ENCODE measurements at regions of chr11 and their contacts with region 1.

Region 1: DNA sequence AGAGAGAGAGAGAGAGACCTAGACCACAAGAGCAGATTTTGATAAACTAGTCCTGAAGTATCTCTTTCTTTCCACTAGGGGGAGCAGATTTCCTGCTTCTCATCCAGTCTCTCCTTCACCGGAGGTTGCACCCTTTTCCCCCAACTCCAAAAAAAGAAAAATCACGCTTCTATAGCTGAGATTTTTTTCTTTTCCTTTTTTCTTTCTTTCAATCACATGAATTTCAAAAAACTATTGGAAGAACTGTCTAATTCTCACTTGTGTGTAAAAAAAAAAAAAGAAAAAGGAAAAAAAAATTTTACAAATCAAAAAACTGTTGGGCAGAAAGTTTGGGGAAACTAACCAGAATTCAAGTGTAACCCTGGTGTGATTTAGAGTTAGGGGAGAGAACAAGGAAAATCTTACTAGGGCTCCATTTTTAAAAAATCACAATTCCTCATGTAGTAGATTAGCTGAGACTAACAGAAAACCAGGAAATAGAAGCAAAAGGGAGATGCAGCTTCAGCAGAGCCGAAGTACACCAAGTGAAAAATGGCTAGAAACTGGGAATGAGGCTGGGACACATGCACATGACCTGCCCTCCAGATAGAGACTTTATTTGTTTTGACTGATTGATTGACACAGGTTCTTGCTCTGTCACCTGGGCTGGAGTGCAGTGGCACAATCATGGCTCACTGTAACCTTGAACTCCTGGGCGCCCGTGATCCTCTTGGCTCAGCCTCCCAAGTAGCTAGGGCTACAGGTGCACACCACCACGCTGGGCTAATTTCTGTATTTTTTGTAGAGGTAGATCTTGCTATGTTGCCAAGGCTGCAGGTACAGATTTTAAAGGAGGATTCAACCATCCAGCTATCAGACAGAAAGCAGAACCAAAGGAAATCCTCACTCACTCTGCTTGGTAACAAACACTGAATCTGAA is 27.1 kb downstream of the SDHD start:
- DNase-seq: peak in 1 of 2 donors; percentile 67
- ATAC-seq: peak; percentile 69 to 78 (median 77)
- H3K4me3 ChIP-seq: no peak overlapping the region
- H3K4me3 Mint-ChIP-seq: peak overlapping the region; percentile 17
- H3K27ac ChIP-seq: no peak overlapping the region
- H3K27ac Mint-ChIP-seq: no peak overlapping the region
- H3K4me1 ChIP-seq: no peaks in the 10 kb centered on the region
- H3K4me1 Mint-ChIP-seq: peaks cover 4 to 5% of the 10 kb centered on the region in 2 donors
- H3K27me3 ChIP-seq: no peaks in the 10 kb centered on the region
- H3K27me3 Mint-ChIP-seq: no peaks in the 10 kb centered on the region
- CTCF ChIP-seq: peak; percentile 79

Region 2: GRCh38 chr11:111938687-111939160 is 175.1 kb before region 1 on chr11:
- intact Hi-C with region 1: no loop called
- DNase-seq: peak in 1 of 2 donors; percentile 57
- ATAC-seq: peak; percentile 42 to 52 (median 48)
- H3K4me3 ChIP-seq: no peak overlapping the region
- H3K4me3 Mint-ChIP-seq: peak overlapping the region; percentile 87
- H3K27ac ChIP-seq: no peak overlapping the region
- H3K27ac Mint-ChIP-seq: peak overlapping the region; percentile 6 to 21
- H3K4me1 ChIP-seq: peaks cover 22% of the 10 kb centered on the region
- H3K4me1 Mint-ChIP-seq: peaks cover 31 to 34% of the 10 kb centered on the region in 2 donors
- H3K27me3 ChIP-seq: no peaks in the 10 kb centered on the region
- H3K27me3 Mint-ChIP-seq: peaks cover 3 to 7% of the 10 kb centered on the region in 2 donors
- CTCF ChIP-seq: no peak

Region 3: DNA sequence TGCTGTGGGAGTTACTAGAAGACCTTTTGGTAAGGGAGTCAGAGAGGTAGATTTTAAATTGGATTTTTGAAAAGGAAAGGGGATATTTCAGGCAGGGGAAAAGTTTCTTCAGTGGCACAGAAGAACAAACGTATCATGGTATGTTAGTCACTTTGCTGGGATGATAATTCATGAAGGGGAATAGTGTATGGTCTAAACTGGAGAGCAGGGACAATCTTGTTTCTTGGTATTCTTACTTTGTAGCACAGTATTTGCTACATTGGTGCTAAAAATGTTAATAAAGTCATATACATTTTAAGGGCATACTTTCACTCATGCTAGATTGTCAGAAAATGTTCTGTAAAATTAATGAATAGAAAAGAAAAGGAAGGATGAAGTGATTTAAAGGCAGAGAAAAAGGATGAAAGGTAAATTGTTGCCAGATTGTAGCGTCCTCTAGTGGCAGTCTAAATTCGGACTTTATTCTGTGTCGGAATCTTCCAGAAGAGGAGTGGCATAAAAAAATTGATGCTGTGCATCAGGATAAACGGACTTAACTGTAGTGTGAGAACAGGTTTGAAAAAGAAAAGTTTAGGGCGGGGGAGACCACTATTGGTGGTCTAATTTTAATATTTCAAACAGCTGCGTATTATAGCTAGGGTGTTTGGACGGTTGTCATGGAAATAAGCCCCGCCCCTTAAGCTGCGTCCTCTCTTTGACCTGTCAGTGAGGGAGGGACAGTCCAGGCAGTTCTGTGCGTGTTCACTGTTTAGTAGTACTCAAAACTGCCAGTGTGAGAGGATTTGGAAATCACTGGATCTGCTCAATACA is 61.2 kb after region 1 on chr11 and contains the start of gene BCO2:
- intact Hi-C with region 1: loop called (anchors 1 kb)
- DNase-seq: peak; percentile 56 to 62
- ATAC-seq: peak; percentile 86 to 91 (median 87)
- H3K4me3 ChIP-seq: no peak within 1 kb of the TSS
- H3K4me3 Mint-ChIP-seq: peak within 1 kb of the TSS; percentile 62
- H3K27ac ChIP-seq: no peak within 1 kb of the TSS
- H3K27ac Mint-ChIP-seq: peak within 1 kb of the TSS; percentile 47 to 74
- H3K4me1 ChIP-seq: peaks cover 19% of the 10 kb centered on the region
- H3K4me1 Mint-ChIP-seq: peaks cover 42 to 45% of the 10 kb centered on the region in 2 donors
- H3K27me3 ChIP-seq: no peaks in the 10 kb centered on the region
- H3K27me3 Mint-ChIP-seq: peaks cover 5 to 12% of the 10 kb centered on the region in 2 donors
- CTCF ChIP-seq: peak; percentile 82
- total RNA-seq, gene BCO2: 3.9 to 7.2 (median 5.8) TPM